GM12878 (cell line): ENCODE measurements at regions of chr6 and their contacts with region 1.

Region 1: GRCh38 chr6:25490018-25490801 is 161.8 kb upstream of the SCGN start:
- DNase-seq: peak; percentile 42
- ATAC-seq: peak; percentile 99
- H3K4me3 ChIP-seq: no peak overlapping the region
- H3K27ac ChIP-seq: no peak overlapping the region; the same call in 1 of the 2 replicates
- H3K4me1 ChIP-seq: no peaks in the 10 kb centered on the region
- H3K27me3 ChIP-seq: no peaks in the 10 kb centered on the region
- CTCF ChIP-seq: peak; percentile 84 to 89 (median 88)
- EP300 ChIP-seq: no peak
- POLR2A ChIP-seq: no peak
- RAD21 ChIP-seq: peak; percentile 97

Region 2: DNA sequence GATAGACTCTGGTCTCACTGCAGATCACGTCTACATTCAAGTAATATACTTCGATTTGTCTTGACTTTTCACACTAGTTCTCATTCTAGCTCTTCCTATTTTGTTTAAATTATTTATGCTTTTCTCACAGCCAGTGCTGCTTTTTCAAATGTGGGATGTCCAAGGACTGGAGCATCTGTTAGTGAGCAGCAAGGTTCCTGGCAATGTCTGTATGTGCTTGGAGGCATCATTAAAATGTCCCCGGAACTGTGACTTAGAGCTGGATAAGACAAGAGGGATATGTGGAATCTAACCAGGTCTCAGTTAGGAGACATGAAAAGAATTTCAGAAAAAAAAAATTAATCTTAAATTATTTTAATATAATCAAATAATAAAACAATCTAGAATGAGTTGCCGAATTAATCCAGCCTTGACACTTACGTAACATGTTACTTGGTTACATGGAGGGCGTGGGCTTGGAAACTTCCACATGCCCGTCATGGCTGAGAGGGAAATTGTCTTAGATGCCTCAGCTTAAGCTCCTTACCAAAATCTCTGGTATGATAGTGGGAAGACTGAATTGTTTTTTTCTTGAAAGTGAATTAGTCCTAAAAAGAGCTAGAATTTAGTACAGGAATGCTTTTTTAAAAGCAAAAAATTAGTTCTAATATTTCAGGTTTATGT is 232.4 kb before region 1 on chr6:
- CTCF ChIA-PET with region 1: interaction called, 287 read pairs
- POLR2A ChIA-PET with region 1: no interaction called
- RAD21 ChIA-PET with region 1: interaction called, 14 read pairs
- SMC1A ChIA-PET with region 1: interaction called, 191 read pairs
- in situ Hi-C with region 1: no loop called
- intact Hi-C with region 1: no loop called
- DNase-seq: no peak
- ATAC-seq: no peak
- H3K4me3 ChIP-seq: no peak overlapping the region
- H3K27ac ChIP-seq: no peak overlapping the region
- H3K4me1 ChIP-seq: no peaks in the 10 kb centered on the region
- H3K27me3 ChIP-seq: peaks cover 0 to 3% of the 10 kb centered on the region in 2 experiments; a peak in 1 of 4 replicates
- CTCF ChIP-seq: no peak
- EP300 ChIP-seq: no peak
- POLR2A ChIP-seq: no peak
- RAD21 ChIP-seq: no peak

Region 3: GRCh38 chr6:25288143-25288917 is 201.9 kb before region 1 on chr6:
- CTCF ChIA-PET with region 1: interaction called, 11 read pairs
- POLR2A ChIA-PET with region 1: interaction called, 3 read pairs
- RAD21 ChIA-PET with region 1: interaction called, 4 read pairs
- SMC1A ChIA-PET with region 1: interaction called, 11 read pairs
- in situ Hi-C with region 1: no loop called
- intact Hi-C with region 1: no loop called
- DNase-seq: no peak
- ATAC-seq: no peak; the same call in none of the 3 replicates
- H3K4me3 ChIP-seq: no peak overlapping the region
- H3K27ac ChIP-seq: no peak overlapping the region
- H3K4me1 ChIP-seq: no peaks in the 10 kb centered on the region
- H3K27me3 ChIP-seq: no peaks in the 10 kb centered on the region
- CTCF ChIP-seq: no peak
- EP300 ChIP-seq: no peak
- POLR2A ChIP-seq: no peak
- RAD21 ChIP-seq: no peak

Region 4: DNA sequence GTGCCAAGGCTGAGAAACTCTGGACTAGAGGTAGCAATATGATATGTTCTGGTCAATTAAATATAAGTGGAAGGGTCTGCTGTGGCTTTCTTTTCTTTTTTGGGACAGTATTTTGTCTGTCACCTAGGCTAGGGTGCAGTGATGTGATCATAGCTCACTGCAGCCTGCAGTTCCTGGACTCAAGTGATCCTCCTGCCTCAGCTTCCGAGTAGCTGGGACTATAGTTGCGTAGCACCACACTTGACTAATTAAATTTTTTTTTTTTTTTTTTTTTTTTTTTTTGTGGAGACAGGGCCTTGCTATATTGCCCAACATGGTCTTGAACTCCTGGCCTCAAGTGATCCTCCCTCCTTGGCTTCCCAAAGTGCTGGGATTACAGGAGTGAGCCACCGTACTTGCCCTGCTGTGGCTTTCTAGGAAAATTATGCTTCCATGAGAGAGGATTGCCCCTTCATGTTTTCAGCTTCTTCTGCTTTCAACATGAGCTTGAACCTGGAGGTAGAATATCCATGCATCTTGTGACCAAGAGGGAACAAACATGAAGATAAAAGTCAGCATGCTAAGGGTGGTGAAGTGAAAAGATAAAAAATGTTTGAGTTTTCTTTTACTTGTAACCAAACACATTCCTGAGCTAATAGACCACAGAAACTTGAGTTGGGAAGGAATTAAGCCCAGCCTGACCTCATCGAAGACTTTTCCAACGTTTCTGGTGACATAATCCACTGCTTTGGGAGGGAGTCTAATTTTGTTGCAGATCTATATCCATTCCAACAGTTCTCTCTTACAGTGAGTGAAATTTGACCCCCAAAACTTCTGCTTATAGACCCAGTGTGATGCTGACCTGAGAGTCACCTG is 135.9 kb before region 1 on chr6:
- CTCF ChIA-PET with region 1: interaction called, 14 read pairs
- POLR2A ChIA-PET with region 1: no interaction called
- RAD21 ChIA-PET with region 1: interaction called, 10 read pairs
- SMC1A ChIA-PET with region 1: interaction called, 8 read pairs
- in situ Hi-C with region 1: no loop called
- intact Hi-C with region 1: no loop called
- DNase-seq: no peak
- ATAC-seq: no peak
- H3K4me3 ChIP-seq: no peak overlapping the region
- H3K27ac ChIP-seq: no peak overlapping the region
- H3K4me1 ChIP-seq: no peaks in the 10 kb centered on the region
- H3K27me3 ChIP-seq: no peaks in the 10 kb centered on the region
- CTCF ChIP-seq: no peak
- EP300 ChIP-seq: no peak
- POLR2A ChIP-seq: no peak
- RAD21 ChIP-seq: no peak

Region 5: DNA sequence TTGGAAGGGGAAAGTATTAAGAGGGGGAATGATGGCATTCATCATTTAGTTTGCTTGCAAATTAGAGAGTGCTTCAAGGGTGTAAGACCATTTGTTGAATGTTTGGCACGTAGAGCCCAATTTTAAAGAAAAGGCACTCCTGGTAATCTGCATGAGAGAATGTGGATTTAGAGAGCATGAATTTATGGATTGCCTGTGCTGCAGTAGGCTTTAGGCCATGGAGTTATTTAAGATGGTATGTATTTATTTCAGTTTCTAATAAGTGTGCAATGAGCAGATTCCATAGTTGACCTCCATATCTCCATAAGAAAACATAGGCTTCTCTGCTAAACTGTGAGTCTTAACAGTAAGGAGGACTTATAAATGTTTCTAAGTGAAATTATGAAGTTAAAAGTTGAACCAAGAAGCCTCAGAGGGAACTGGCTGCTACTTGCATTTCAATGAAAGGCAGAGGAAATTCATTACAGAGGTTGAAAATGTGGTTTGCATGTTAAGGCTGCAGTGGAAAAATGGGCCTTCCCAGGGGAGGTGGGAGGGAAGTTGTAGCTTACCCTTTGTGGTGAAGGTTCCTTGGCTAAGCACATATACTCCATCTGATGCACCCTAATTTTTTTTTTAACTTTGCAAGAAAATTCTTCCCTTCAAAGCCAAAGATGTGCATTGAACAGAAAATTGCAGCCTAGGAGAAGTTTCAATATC is 76.9 kb before region 1 on chr6:
- CTCF ChIA-PET with region 1: interaction called, 5 read pairs
- POLR2A ChIA-PET with region 1: no interaction called
- RAD21 ChIA-PET with region 1: interaction called, 11 read pairs
- SMC1A ChIA-PET with region 1: interaction called, 4 read pairs
- in situ Hi-C with region 1: no loop called
- intact Hi-C with region 1: no loop called
- DNase-seq: no peak
- ATAC-seq: no peak
- H3K4me3 ChIP-seq: no peak overlapping the region
- H3K27ac ChIP-seq: no peak overlapping the region
- H3K4me1 ChIP-seq: no peaks in the 10 kb centered on the region
- H3K27me3 ChIP-seq: no peaks in the 10 kb centered on the region
- CTCF ChIP-seq: no peak
- EP300 ChIP-seq: no peak
- POLR2A ChIP-seq: no peak
- RAD21 ChIP-seq: no peak

Region 6: GRCh38 chr6:25476831-25477590 is 13.2 kb before region 1 on chr6:
- CTCF ChIA-PET with region 1: interaction called, 37 read pairs
- POLR2A ChIA-PET with region 1: interaction called, 5 read pairs
- RAD21 ChIA-PET with region 1: interaction called, 20 read pairs
- SMC1A ChIA-PET with region 1: interaction called, 13 read pairs
- in situ Hi-C with region 1: no loop called
- intact Hi-C with region 1: no loop called
- DNase-seq: no peak
- ATAC-seq: peak; percentile 22; the same call in 2 of the 3 replicates
- H3K4me3 ChIP-seq: no peak overlapping the region
- H3K27ac ChIP-seq: no peak overlapping the region
- H3K4me1 ChIP-seq: peaks cover 6% of the 10 kb centered on the region; the same call in 1 of the 2 replicates
- H3K27me3 ChIP-seq: no peaks in the 10 kb centered on the region
- CTCF ChIP-seq: no peak
- EP300 ChIP-seq: no peak
- POLR2A ChIP-seq: no peak
- RAD21 ChIP-seq: no peak

Region 7: DNA sequence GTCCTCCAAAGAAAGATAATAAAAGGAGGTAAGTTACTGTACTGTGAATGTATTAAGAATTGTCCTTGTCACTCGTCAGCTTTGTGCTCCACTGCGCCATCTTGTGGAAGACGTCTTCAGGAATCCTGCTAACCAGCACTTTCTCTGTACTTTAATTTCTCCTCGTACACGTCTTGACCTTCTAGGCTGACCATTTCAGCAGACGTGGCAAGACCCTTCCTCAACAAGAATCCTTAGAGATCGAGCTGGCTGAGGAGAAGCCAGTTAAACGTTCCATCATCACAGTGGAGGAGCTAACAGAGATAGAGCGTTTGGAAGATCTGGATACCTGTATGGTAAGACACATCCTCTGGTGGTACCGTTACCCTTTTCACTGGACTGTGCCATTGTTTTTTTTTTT is 66.3 kb after region 1 on chr6:
- CTCF ChIA-PET with region 1: interaction called, 37 read pairs
- POLR2A ChIA-PET with region 1: no interaction called
- RAD21 ChIA-PET with region 1: interaction called, 21 read pairs
- SMC1A ChIA-PET with region 1: interaction called, 17 read pairs
- in situ Hi-C with region 1: no loop called
- intact Hi-C with region 1: no loop called
- DNase-seq: peak; percentile 28
- ATAC-seq: peak; percentile 90
- H3K4me3 ChIP-seq: no peak overlapping the region
- H3K27ac ChIP-seq: no peak overlapping the region
- H3K4me1 ChIP-seq: no peaks in the 10 kb centered on the region
- H3K27me3 ChIP-seq: no peaks in the 10 kb centered on the region
- CTCF ChIP-seq: peak; percentile 80 to 83 (median 81)
- EP300 ChIP-seq: no peak
- POLR2A ChIP-seq: no peak
- RAD21 ChIP-seq: peak; percentile 60